ENCODE measurements at regions of chr6 and their contacts with region 1.

Region 1: GRCh38 chr6:29016559-29017427 is 11.7 kb upstream of the ZNF311 start:
- DNase-seq: peak; percentile 63
- ATAC-seq: peak; percentile 85
- H3K4me3 Mint-ChIP-seq: peak overlapping the region; percentile 80
- H3K27ac Mint-ChIP-seq: peak overlapping the region; percentile 41
- H3K4me1 Mint-ChIP-seq: peaks cover 17% of the 10 kb centered on the region
- H3K27me3 Mint-ChIP-seq: peaks cover 31% of the 10 kb centered on the region
- CTCF ChIP-seq: peak; percentile 92

Region 2: GRCh38 chr6:28683944-28684538 is 332.8 kb before region 1 on chr6:
- CTCF ChIA-PET with region 1: interaction called, 7 read pairs
- POLR2A ChIA-PET with region 1: no interaction called
- intact Hi-C with region 1: loop called (anchors 1 kb)
- DNase-seq: no peak
- ATAC-seq: no peak
- H3K4me3 Mint-ChIP-seq: no peak overlapping the region
- H3K27ac Mint-ChIP-seq: no peak overlapping the region
- H3K4me1 Mint-ChIP-seq: peaks cover 3% of the 10 kb centered on the region
- H3K27me3 Mint-ChIP-seq: peaks cover 66% of the 10 kb centered on the region
- CTCF ChIP-seq: no peak

Region 3: GRCh38 chr6:28863604-28864320 is 153.0 kb before region 1 on chr6:
- CTCF ChIA-PET with region 1: no interaction called
- POLR2A ChIA-PET with region 1: no interaction called
- intact Hi-C with region 1: loop called (anchors 1 kb)
- DNase-seq: peak; percentile 54
- ATAC-seq: peak; percentile 30
- H3K4me3 Mint-ChIP-seq: peak overlapping the region; percentile 85
- H3K27ac Mint-ChIP-seq: peak overlapping the region; percentile 90
- H3K4me1 Mint-ChIP-seq: peaks cover 27% of the 10 kb centered on the region
- H3K27me3 Mint-ChIP-seq: peaks cover 4% of the 10 kb centered on the region
- CTCF ChIP-seq: no peak

Region 4: DNA sequence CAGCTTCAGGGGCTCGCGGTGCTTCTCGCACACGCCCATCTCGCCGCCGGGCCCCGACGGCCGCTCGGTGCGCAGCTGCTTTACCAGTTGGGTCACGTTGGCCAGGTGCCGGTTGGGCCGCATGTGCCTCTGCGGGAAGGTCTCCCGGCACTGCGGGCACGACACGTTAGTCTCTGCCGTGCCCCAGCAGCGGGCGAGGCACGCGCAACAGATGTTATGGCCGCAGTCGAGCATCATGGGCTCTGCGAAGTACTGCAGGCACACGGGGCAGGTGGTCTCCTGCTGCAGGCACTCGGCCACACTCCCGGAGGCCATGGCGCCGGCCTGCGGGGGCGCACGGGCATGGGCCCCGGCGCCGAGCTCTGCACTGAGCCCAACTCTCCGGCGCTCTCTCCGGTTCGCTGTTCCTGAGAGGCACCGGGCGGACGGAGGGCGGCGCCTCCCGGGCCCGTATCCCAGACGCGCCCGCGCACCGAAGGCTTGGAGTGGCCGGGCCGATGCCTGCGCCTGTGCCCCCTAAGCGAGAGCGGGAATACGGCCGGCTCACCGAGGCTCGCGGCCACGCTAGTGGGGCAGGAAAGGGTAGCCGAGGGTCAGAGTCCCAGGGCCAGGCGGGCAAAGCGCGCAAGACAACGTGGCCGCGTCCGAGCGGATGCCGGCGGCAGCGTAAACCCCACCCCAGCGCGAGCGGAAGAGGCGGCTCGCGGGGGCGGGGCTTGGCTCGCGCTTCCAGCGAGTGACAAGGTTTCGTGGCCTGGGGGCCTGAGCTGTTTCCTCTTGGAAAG is 93.3 kb before region 1 on chr6 and contains the start of gene TRIM27:
- CTCF ChIA-PET with region 1: no interaction called
- POLR2A ChIA-PET with region 1: no interaction called
- intact Hi-C with region 1: loop called (anchors 1 kb)
- DNase-seq: peak; percentile 85
- ATAC-seq: peak; percentile 87
- H3K4me3 Mint-ChIP-seq: peak within 1 kb of the TSS; percentile 92
- H3K27ac Mint-ChIP-seq: peak within 1 kb of the TSS; percentile 92
- H3K4me1 Mint-ChIP-seq: peaks cover 42% of the 10 kb centered on the region
- H3K27me3 Mint-ChIP-seq: no peaks in the 10 kb centered on the region
- CTCF ChIP-seq: no peak
- total RNA-seq, gene TRIM27: 59.5 and 64.8 TPM in 2 replicates

Region 5: GRCh38 chr6:28940858-28941680 is 75.7 kb before region 1 on chr6:
- CTCF ChIA-PET with region 1: no interaction called
- POLR2A ChIA-PET with region 1: no interaction called
- intact Hi-C with region 1: loop called (anchors 2 kb)
- DNase-seq: peak; percentile 36
- ATAC-seq: peak; percentile 66
- H3K4me3 Mint-ChIP-seq: peak overlapping the region; percentile 95
- H3K27ac Mint-ChIP-seq: peak overlapping the region; percentile 88
- H3K4me1 Mint-ChIP-seq: peaks cover 47% of the 10 kb centered on the region
- H3K27me3 Mint-ChIP-seq: peaks cover 3% of the 10 kb centered on the region
- CTCF ChIP-seq: no peak

Region 6: DNA sequence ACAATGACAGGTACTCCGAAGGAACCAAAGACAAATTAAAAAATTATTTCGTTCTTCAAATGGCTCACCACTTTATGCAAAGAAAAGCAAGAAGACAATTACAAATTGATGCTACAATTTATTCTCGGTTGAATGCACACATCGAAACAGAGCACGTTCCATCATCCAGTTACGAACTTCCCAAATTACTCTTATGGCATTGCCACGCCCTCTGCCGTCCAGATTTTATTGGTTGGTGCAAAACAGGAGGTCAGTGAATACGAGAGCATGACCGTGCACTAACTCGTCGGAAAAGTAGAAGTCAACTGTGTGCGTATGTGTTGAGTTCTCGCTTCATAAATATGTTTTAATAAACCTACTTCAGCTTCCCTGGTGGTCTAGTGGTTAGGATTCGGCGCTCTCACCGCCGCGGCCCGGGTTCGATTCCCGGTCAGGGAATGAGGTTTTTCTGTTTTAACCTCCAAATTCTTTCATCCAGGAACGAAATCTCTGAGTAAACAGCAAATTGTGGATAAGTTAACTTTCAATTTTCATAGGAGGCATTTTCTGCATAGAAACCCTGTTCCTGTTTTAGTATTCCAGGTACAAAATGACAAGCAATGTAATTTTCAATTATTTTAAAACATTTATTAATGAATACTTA is 34.8 kb before region 1 on chr6:
- CTCF ChIA-PET with region 1: no interaction called
- POLR2A ChIA-PET with region 1: no interaction called
- intact Hi-C with region 1: loop called (anchors 2 kb)
- DNase-seq: peak; percentile 65
- ATAC-seq: peak; percentile 61
- H3K4me3 Mint-ChIP-seq: peak overlapping the region; percentile 89
- H3K27ac Mint-ChIP-seq: peak overlapping the region; percentile 97
- H3K4me1 Mint-ChIP-seq: peaks cover 50% of the 10 kb centered on the region
- H3K27me3 Mint-ChIP-seq: peaks cover 32% of the 10 kb centered on the region
- CTCF ChIP-seq: no peak

Region 7: GRCh38 chr6:29589423-29590048 is 572.7 kb after region 1 on chr6:
- CTCF ChIA-PET with region 1: no interaction called
- POLR2A ChIA-PET with region 1: no interaction called
- intact Hi-C with region 1: loop called (anchors 2 kb)
- DNase-seq: no peak
- ATAC-seq: peak; percentile 77
- H3K4me3 Mint-ChIP-seq: no peak overlapping the region
- H3K27ac Mint-ChIP-seq: no peak overlapping the region
- H3K4me1 Mint-ChIP-seq: peaks cover 2% of the 10 kb centered on the region
- H3K27me3 Mint-ChIP-seq: peaks cover 16% of the 10 kb centered on the region
- CTCF ChIP-seq: peak; percentile 79

Measured in activated B cell treated with CpG ODN at 0.5 μM for 24 hours (primary cell).